Activated CD8-positive, alpha-beta T cell treated with anti-CD3 and anti-CD28 coated beads, Interleukin-2, amount 10 ng/mL, durations not matched to agents 7 days and 5 days (primary cell): ENCODE measurements at regions of chr3 and their contacts with region 1.

Region 1: DNA sequence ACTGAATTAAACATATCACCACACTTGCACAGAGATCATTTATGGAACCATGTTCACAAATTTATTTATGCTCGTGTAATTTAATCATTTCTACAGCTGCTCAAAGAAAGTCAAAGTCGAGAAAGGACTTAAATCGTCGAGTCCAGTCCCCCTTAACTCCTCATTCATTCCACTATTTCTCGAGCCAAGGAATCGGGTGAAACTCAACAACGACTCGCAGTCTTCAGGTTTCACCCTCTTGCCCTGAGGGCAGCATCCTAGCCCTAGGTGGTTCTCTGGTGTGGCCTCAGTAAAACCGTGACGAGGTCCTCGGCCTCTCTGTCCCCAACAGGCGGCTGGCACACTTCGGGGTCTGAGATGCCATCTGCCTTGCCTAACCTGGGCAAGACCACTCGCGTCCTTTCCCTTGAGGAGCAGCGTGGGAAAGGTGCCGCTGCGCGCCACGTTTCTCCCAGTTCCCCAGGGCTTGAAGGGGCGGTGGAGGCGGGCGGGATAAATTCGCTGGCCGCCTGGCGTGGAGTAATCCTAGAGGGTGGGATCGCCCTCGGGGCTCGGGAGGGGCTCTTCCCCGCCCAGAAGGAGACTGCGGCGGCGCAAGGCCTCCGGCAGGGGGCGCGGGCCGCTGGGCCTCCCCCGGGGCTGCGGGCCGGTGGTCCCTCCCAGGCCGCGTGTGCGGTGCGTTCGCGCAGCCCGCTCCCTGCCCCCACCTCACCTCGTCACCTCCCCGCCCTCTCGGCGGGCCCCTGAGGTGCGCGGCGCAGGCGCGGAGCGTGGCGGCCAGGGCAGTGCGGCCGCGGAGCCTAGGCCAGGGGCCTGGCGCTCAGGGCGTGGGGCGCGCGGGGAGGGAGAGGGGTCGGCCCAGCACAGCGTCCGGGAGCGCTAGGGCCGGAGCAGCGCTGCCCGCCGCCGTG is at the start of gene ZNF639:
- DNase-seq: peak; percentile 86
- ATAC-seq: peak; percentile 86
- H3K4me3 Mint-ChIP-seq: peak within 1 kb of the TSS; percentile 92
- H3K27ac Mint-ChIP-seq: peak within 1 kb of the TSS; percentile 94
- H3K4me1 Mint-ChIP-seq: peaks cover 32% of the 10 kb centered on the region
- H3K27me3 Mint-ChIP-seq: peaks cover 2% of the 10 kb centered on the region
- total RNA-seq, gene ZNF639: 36.3 to 40.6 TPM

Region 2: DNA sequence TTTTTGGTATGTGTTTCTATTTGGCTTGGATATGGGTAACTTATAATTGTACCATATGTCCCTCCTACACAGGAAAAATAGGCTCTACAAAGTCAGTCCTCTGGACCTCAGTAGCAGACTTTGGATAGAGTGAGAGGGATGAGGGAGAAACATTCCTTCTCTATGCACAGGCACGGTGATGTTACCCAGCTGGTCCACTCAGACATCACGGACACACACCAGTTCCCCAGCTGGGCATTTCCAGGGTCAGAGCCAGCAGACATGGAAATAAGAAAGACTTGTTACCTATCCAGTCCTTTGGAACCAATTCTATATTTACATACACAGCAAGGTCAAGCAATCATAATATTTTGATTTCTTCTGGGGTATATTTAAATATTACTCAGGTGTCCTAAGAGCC is 1219.4 kb before region 1 on chr3:
- CTCF ChIA-PET with region 1: no interaction called
- POLR2A ChIA-PET with region 1: no interaction called
- DNase-seq: no peak
- ATAC-seq: no peak
- H3K4me3 Mint-ChIP-seq: no peak overlapping the region
- H3K27ac Mint-ChIP-seq: no peak overlapping the region
- H3K4me1 Mint-ChIP-seq: no peaks in the 10 kb centered on the region
- H3K27me3 Mint-ChIP-seq: no peaks in the 10 kb centered on the region

Region 3: DNA sequence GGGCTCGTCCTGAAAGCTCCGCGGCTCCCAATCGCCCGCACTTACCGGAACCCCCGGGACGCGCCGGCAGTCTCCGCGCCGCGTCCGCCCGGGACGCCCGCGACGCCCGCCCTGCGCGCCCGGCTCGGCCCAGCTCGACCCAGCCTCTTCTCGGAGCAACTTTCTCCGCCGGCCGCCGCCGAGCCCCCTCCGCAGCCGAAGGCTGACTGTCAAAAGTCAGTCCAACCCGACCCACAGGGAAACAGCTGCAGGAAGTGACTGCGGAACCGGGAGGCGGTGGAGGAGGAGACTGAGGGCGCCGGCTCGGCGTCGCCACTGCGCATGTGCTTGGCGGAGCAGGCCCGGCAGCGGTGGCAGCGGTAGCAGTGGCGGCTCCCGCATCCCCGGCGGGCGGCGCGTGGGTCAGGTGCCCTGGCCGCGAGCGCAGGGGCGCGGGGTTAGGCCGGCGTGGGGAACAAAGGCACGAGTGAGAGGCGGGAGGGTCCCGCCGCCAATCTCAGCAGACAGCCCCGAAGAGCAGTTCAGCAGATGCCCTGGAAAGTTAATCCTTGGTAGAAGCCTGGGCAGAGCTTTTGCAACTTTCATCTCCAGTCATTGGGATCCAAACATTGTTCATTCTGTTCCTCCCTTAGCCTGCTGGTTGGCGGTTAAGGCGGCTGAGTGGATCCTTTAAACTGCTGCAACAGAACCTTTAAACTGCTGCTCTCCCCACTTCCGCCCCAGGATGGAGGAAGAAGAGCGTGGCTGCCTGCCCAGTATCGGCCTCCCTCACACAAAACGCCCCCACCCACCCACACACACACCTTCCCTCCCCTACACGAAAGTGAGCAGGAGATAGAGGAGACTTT is 250.8 kb before region 1 on chr3 and contains the start of gene ZMAT3:
- CTCF ChIA-PET with region 1: interaction called, 39 read pairs
- POLR2A ChIA-PET with region 1: interaction called, 4 read pairs
- DNase-seq: peak; percentile 87
- ATAC-seq: peak; percentile 89
- H3K4me3 Mint-ChIP-seq: peak within 1 kb of the TSS; percentile 96
- H3K27ac Mint-ChIP-seq: peak within 1 kb of the TSS; percentile 90
- H3K4me1 Mint-ChIP-seq: peaks cover 50% of the 10 kb centered on the region
- H3K27me3 Mint-ChIP-seq: no peaks in the 10 kb centered on the region
- total RNA-seq, gene ZMAT3: 15.9 to 17.1 TPM

Region 4: DNA sequence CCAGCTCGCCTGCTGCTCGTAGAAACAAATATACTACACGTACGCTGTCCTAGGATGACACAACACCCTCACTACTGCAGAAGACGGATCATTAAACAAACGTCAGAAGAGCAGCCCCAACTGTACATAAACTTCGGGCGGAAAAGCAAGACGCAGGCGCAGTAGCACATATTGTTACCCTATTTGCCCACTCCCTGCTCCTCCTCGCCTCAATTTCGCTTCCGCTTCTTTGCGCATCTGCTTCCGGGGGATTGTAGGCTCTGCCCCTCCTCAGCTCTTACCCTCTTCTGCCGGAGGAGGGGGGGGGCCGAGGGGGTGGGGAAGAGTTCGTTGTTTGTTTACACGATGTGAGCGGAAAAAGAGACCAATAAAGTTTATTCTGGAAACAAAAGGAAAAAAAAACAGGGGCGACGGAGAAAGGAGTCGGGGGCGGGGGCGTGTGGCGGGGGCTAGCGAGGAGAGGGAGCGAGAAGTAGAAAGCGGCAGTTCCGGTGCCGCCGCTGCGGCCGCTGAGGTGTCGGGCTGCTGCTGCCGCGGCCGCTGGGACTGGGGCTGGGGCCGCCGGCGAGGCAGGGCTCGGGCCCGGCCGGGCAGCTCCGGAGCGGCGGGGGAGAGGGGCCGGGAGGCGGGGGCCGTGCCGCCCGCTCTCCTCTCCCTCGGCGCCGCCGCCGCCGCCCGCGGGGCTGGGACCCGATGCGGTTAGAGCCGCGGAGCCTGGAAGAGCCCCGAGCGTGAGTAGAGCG is 174.5 kb before region 1 on chr3 and contains the start of gene PIK3CA:
- CTCF ChIA-PET with region 1: interaction called, 5 read pairs
- POLR2A ChIA-PET with region 1: interaction called, 14 read pairs
- DNase-seq: peak; percentile 97
- ATAC-seq: peak; percentile 86
- H3K4me3 Mint-ChIP-seq: peak within 1 kb of the TSS; percentile 96
- H3K27ac Mint-ChIP-seq: peak within 1 kb of the TSS; percentile 88
- H3K4me1 Mint-ChIP-seq: peaks cover 31% of the 10 kb centered on the region
- H3K27me3 Mint-ChIP-seq: peaks cover 12% of the 10 kb centered on the region
- total RNA-seq, gene PIK3CA: 22.3 to 23.9 TPM

Region 5: DNA sequence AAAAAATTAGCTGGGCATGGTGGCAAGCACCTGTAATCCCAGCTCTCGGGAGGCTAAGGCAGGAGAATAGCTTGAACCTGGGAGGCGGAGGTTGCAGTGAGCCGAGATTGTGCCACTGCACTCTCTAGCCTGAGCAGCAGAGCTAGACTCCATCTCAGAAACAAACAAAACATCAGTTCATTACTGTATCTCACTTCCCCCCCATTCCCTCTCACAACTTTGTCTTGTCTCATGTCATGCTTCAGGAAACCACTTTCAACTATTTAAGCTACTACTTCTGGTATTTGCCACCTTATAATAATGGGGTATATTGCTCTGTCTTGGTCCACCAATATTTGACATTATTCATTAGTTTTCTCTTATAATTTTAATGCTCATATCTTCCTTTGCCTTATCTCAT is 148.2 kb before region 1 on chr3:
- CTCF ChIA-PET with region 1: no interaction called
- POLR2A ChIA-PET with region 1: no interaction called
- DNase-seq: no peak
- ATAC-seq: no peak
- H3K4me3 Mint-ChIP-seq: no peak overlapping the region
- H3K27ac Mint-ChIP-seq: no peak overlapping the region
- H3K4me1 Mint-ChIP-seq: peaks cover 17% of the 10 kb centered on the region
- H3K27me3 Mint-ChIP-seq: no peaks in the 10 kb centered on the region

Region 6: DNA sequence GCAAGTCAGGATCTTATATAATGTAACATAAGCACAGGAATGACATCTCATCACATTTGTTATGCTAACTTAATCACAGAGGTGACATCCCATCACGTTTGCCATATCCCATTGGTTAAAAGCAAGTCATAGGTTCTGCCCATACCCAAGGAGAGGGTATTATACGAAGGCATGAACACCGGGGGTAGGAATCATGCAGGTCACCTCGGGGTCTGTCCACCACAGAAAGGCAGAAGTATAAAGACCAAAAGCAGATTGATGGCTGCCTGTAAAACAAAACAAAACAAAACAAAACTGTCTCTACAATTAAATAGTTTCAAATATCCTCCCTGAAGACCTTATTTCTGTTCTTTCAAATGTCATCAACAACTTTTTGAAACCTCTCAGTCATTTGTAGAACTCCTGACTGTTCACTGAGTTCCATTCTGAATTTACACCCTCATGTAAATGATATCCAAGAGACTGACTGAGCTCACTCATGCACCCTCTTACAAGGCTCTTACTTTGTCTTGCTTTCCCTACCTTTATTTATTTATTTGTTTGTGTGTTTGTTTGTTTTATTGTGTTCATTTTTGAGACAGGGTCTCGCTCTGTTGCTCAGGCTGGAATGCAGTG is 22.4 kb before region 1 on chr3:
- CTCF ChIA-PET with region 1: no interaction called
- POLR2A ChIA-PET with region 1: no interaction called
- DNase-seq: no peak
- ATAC-seq: no peak
- H3K4me3 Mint-ChIP-seq: no peak overlapping the region
- H3K27ac Mint-ChIP-seq: no peak overlapping the region
- H3K4me1 Mint-ChIP-seq: no peaks in the 10 kb centered on the region
- H3K27me3 Mint-ChIP-seq: peaks cover 12% of the 10 kb centered on the region

Region 7: DNA sequence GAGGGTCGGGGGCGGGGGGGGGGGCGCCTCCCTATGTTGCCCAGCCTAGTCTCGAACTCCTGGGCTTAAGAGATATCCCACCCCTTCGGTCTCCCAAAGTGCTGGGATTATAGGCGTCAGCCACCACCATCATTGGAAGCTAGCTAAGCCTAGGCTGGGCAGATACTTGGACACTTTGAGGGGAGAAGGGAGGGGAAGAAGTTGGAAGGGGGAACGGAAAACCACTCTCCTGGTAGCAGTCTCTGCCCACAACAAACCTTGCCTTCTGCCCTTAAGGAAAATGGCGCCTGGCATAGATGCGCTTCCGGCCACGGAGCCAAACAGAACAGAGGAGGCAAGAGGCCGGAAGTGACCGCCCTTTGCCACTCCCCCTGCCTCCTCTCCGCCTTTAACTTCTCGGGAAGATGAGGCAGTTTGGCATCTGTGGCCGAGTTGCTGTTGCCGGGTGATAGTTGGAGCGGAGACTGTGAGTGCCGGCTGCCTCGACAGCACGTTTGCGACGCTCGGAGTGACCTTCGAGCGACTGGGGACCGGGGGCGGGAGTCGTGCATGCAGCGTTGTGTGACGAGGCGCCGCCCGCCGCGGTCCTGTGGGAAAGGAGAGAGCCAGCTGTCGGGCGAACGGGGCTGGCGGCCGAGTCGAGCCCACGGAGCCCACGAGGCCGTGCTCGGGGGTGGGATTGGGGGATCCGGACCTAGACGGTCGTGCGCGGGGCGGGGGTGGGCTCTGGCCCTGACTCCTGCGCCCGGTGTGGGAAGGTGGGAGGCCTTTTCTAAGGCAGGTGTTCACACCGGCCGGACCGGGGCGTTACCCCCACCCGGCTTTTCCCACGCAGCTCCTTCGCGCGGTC is 25.0 kb after region 1 on chr3 and contains the start of gene MFN1:
- CTCF ChIA-PET with region 1: interaction called, 9 read pairs
- POLR2A ChIA-PET with region 1: interaction called, 12 read pairs
- DNase-seq: peak; percentile 94
- ATAC-seq: peak; percentile 98
- H3K4me3 Mint-ChIP-seq: peak within 1 kb of the TSS; percentile 94
- H3K27ac Mint-ChIP-seq: peak within 1 kb of the TSS; percentile 93
- H3K4me1 Mint-ChIP-seq: peaks cover 15% of the 10 kb centered on the region
- H3K27me3 Mint-ChIP-seq: no peaks in the 10 kb centered on the region
- total RNA-seq, gene MFN1: 25.5 to 30.4 TPM